CD14-positive monocyte (primary cell): ENCODE measurements at regions of chrX and their contacts with region 1.

Region 1: GRCh38 chrX:48917139-48918001 is 1.5 kb downstream of the PIM2 start:
- DNase-seq: peak; percentile 88 to 97 (median 90)
- H3K4me3 ChIP-seq: peak overlapping the region; percentile 48 to 78 (median 68)
- H3K4me3 Mint-ChIP-seq: peak overlapping the region; percentile 87 to 89
- H3K27ac ChIP-seq: peak overlapping the region; percentile 12 to 19
- H3K27ac Mint-ChIP-seq: peak overlapping the region; percentile 56 to 92 (median 89)
- H3K4me1 ChIP-seq: peaks cover 24 to 27% of the 10 kb centered on the region in 2 donors
- H3K4me1 Mint-ChIP-seq: peaks cover 27% of the 10 kb centered on the region
- H3K27me3 ChIP-seq: no peaks in the 10 kb centered on the region
- H3K27me3 Mint-ChIP-seq: peaks cover 0 to 15% (median 0%) of the 10 kb centered on the region in 3 donors
- CTCF ChIP-seq: peak; percentile 83

Region 2: DNA sequence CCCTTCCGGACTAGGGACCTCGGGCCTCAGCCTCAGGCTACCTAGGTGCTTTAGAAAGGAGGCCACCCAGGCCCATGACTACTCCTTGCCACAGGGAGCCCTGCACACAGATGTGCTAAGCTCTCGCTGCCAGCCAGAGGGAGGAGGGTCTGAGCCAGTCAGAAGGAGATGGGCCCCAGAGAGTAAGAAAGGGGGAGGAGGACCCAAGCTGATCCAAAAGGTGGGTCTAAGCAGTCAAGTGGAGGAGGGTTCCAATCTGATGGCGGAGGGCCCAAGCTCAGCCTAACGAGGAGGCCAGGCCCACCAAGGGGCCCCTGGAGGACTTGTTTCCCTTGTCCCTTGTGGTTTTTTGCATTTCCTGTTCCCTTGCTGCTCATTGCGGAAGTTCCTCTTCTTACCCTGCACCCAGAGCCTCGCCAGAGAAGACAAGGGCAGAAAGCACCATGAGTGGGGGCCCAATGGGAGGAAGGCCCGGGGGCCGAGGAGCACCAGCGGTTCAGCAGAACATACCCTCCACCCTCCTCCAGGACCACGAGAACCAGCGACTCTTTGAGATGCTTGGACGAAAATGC is 233.9 kb before region 1 on chrX and contains the start of gene WAS:
- intact Hi-C with region 1: loop called in 1 of 2 experiments (anchors 10 kb)
- DNase-seq: peak; percentile 78 to 84 (median 81)
- H3K4me3 ChIP-seq: peak within 1 kb of the TSS; percentile 59 to 91 (median 84)
- H3K4me3 Mint-ChIP-seq: peak within 1 kb of the TSS; percentile 94 to 95
- H3K27ac ChIP-seq: peak within 1 kb of the TSS; percentile 98 to 99
- H3K27ac Mint-ChIP-seq: peak within 1 kb of the TSS; percentile 94 to 99 (median 97)
- H3K4me1 ChIP-seq: peaks cover 70 to 92% of the 10 kb centered on the region in 2 donors
- H3K4me1 Mint-ChIP-seq: peaks cover 71% of the 10 kb centered on the region
- H3K27me3 ChIP-seq: no peaks in the 10 kb centered on the region
- H3K27me3 Mint-ChIP-seq: peaks cover 0 to 10% (median 0%) of the 10 kb centered on the region in 3 donors
- CTCF ChIP-seq: no peak
- polyA plus RNA-seq, gene WAS: 22.8 to 159 (median 38.0) TPM

Region 3: DNA sequence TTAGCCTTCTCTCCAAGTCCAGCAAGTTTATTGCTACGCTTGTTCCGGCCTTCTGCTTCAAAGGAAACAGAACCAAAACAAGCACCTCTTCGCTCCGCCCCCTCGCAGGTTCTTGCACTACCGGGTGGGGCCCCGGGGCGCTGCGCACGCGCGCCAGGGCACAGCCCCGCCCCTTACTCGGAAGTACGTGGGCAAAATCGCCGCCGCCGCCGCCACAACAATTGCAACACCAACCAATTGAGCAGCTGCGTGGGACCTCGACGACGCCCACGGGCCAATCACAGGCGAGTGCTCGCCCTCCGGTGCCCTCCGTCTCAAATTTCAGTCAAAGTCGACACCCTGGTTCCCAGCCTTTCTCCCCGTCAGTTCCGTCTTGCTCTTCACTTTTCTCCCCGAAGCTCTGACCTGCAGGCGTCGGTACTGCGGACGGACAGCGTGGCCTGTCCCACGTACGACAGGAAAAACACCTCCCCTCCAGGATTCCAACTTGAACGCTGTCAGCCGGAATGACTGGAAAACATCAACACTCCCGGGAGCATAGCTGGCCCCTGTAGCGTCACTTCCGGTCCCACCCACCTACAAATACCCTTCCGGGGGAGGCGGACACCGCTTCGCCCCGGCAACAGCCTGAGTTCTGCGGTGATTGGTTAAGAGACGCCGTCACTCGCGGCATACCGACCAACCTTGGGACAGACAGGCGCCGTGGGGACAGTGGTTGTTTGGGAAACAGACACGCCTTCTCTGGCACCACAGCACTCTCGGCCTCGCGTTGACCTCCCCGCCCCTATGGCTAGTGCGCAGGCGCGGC is 40.7 kb after region 1 on chrX:
- intact Hi-C with region 1: loop called in 1 of 2 experiments (anchors 5 kb)
- DNase-seq: peak; percentile 93 to 98 (median 96)
- H3K4me3 ChIP-seq: peak overlapping the region; percentile 44 to 78 (median 48)
- H3K4me3 Mint-ChIP-seq: peak overlapping the region; percentile 83 to 96
- H3K27ac ChIP-seq: peak overlapping the region; percentile 97 to 100
- H3K27ac Mint-ChIP-seq: peak overlapping the region; percentile 100
- H3K4me1 ChIP-seq: peaks cover 49 to 56% of the 10 kb centered on the region in 2 donors
- H3K4me1 Mint-ChIP-seq: peaks cover 52% of the 10 kb centered on the region
- H3K27me3 ChIP-seq: no peaks in the 10 kb centered on the region
- H3K27me3 Mint-ChIP-seq: peaks cover 0 to 8% (median 1%) of the 10 kb centered on the region in 3 donors
- CTCF ChIP-seq: no peak

Region 4: GRCh38 chrX:49226946-49227345 is 309.6 kb after region 1 on chrX:
- intact Hi-C with region 1: no loop called
- DNase-seq: no peak
- H3K4me3 ChIP-seq: no peak overlapping the region
- H3K4me3 Mint-ChIP-seq: peak overlapping the region in 1 of 2 donors; percentile 28
- H3K27ac ChIP-seq: no peak overlapping the region
- H3K27ac Mint-ChIP-seq: no peak overlapping the region
- H3K4me1 ChIP-seq: peaks cover 15 to 16% of the 10 kb centered on the region in 2 donors
- H3K4me1 Mint-ChIP-seq: peaks cover 11% of the 10 kb centered on the region
- H3K27me3 ChIP-seq: no peaks in the 10 kb centered on the region
- H3K27me3 Mint-ChIP-seq: peaks cover 6 to 19% (median 16%) of the 10 kb centered on the region in 3 donors
- CTCF ChIP-seq: no peak